ENCODE measurements at regions of chr12 and their contacts with region 1.

Region 1: GRCh38 chr12:124327362-124328043 is 32.6 kb downstream of the RFLNA start:
- DNase-seq: peak; percentile 45 to 69
- ATAC-seq: peak; percentile 73 to 80
- H3K4me3 ChIP-seq: no peak overlapping the region
- H3K27ac ChIP-seq: peak overlapping the region; percentile 83 to 91 (median 88)
- H3K4me1 ChIP-seq: peaks cover 22 to 26% of the 10 kb centered on the region in 2 donors
- H3K27me3 ChIP-seq: no peaks in the 10 kb centered on the region
- CTCF ChIP-seq: no peak
- POLR2A ChIP-seq: no peak

Region 2: GRCh38 chr12:124359671-124360581 is 32.4 kb after region 1 on chr12:
- in situ Hi-C with region 1: no loop called
- intact Hi-C with region 1: loop called (anchors 2 kb)
- DNase-seq: peak; percentile 95 to 99
- ATAC-seq: peak; percentile 83 to 86
- H3K4me3 ChIP-seq: no peak overlapping the region
- H3K27ac ChIP-seq: peak overlapping the region; percentile 93 to 98 (median 97)
- H3K4me1 ChIP-seq: peaks cover 59 to 66% of the 10 kb centered on the region in 2 donors
- H3K27me3 ChIP-seq: no peaks in the 10 kb centered on the region
- CTCF ChIP-seq: peak in 1 of 5 experiments; percentile 11
- POLR2A ChIP-seq: no peak